WTC11 (cell line): ENCODE measurements at regions of chr6 and their contacts with region 1.

Region 1: DNA sequence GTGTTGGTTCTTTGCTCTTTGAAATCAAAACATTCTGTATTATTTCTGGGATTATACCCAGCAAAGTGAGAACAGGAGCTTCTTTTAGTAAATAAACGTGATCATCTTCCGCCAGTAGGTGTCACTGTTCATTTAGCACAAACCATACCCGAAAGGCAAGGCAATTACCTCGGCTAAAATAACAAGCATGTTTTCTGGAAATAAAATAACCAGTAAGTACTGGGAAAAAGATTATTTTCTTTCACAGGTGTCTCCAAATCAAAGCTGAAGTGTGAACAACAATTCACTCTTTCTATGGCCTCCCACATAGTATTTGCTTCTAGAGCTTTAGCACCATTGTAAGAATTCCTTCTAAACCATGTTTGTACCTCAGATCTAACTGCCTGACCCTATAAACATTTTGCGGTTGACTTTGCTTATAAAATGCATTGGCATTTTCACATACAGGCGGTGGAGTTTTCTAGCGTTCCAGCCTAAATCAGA is 144.6 kb upstream of the AGPAT4 start:
- DNase-seq: no peak
- ATAC-seq: peak; percentile 33; the same call in 1 of the 2 replicates
- H3K4me3 Mint-ChIP-seq: no peak overlapping the region
- H3K27ac Mint-ChIP-seq: no peak overlapping the region
- H3K4me1 Mint-ChIP-seq: peaks cover 27% of the 10 kb centered on the region
- H3K27me3 Mint-ChIP-seq: 0 out of 2 replicates have a peak, but pooled peaks cover 3% of the 10 kb centered on the region
- CTCF ChIP-seq: peak; percentile 73

Region 2: DNA sequence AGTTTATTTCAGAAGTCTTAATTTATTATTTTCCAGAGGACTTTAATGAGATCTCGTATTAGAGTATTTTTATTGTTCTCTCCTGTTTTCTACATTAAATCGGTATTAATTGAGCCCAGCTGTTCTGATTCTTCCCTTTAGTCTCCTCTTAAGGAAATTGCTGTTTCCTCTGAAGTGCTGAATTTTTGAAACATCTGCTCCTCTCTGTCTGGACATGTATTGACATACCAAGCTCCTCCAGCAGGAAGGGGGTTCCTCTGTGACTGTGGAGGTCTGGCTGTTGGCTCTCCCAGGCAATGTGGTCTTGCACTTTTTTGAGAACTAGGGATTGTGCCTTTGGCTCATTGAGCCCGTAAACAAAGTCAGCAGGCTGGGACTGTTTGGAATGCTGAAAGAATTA is 352.0 kb before region 1 on chr6:
- CTCF ChIA-PET with region 1: no interaction called
- POLR2A ChIA-PET with region 1: no interaction called
- DNase-seq: no peak
- ATAC-seq: no peak
- H3K4me3 Mint-ChIP-seq: no peak overlapping the region
- H3K27ac Mint-ChIP-seq: no peak overlapping the region; the same call in 1 of the 2 replicates
- H3K4me1 Mint-ChIP-seq: peaks cover 18% of the 10 kb centered on the region
- H3K27me3 Mint-ChIP-seq: no peaks in the 10 kb centered on the region
- CTCF ChIP-seq: no peak

Region 3: GRCh38 chr6:161333410-161333809 is 85.1 kb before region 1 on chr6:
- CTCF ChIA-PET with region 1: no interaction called
- POLR2A ChIA-PET with region 1: no interaction called
- DNase-seq: no peak
- ATAC-seq: no peak
- H3K4me3 Mint-ChIP-seq: no peak overlapping the region
- H3K27ac Mint-ChIP-seq: no peak overlapping the region
- H3K4me1 Mint-ChIP-seq: peaks cover 25% of the 10 kb centered on the region
- H3K27me3 Mint-ChIP-seq: peaks cover 4% of the 10 kb centered on the region; the same call in 1 of the 2 replicates
- CTCF ChIP-seq: no peak

Region 4: DNA sequence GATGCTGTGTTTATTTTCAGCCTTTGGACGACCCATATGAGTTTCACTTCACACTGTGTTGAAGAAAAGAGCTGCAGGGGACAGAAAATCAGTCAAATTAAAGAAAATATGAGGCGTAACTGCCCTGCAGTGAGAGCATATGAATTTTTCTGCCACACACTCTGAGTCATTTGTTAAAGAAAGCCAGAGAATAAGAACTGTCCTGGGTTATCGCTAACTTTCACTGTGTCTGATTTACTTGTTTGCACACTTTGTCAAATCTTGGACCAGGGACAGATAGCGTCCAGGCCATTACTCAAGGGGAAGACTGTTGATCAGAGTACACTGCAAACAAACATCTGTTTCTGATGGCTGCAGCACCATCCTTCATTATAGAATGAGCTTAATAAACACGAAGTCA is 17.8 kb before region 1 on chr6:
- CTCF ChIA-PET with region 1: interaction called, 16 read pairs
- POLR2A ChIA-PET with region 1: no interaction called
- DNase-seq: no peak
- ATAC-seq: no peak
- H3K4me3 Mint-ChIP-seq: no peak overlapping the region
- H3K27ac Mint-ChIP-seq: no peak overlapping the region
- H3K4me1 Mint-ChIP-seq: peaks cover 8% of the 10 kb centered on the region
- H3K27me3 Mint-ChIP-seq: no peaks in the 10 kb centered on the region; the same call in 1 of the 2 replicates
- CTCF ChIP-seq: no peak

Region 5: DNA sequence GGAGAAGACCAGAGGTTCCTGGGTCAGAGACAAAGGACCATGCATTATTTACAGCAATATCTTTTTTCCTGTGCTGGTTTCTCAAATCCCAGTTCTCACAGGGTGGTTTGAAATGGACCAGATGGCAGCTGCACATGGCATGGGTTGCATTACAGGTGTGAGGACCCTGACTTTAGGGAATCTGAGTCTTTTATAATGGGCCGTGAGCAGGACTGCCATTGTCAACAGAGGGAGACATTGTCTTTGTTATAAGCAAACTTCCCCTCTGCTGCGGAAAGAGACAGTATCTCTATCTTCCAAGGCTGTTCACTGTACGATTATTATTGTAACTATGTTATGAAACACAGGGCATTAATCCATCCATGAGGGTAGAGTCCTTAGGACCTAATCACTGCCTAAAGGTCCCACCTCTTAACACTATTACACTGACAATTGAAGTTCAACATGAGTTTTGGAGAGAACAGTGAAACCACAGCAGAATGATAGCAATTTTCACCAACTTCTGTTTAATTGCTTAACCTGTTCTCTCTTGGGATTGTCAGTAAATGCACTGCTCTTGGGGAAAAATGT is 11.5 kb after region 1 on chr6:
- CTCF ChIA-PET with region 1: interaction called, 19 read pairs
- POLR2A ChIA-PET with region 1: no interaction called
- DNase-seq: no peak
- ATAC-seq: 0 out of 2 replicates have a peak, but pooled peaks have one; percentile 34
- H3K4me3 Mint-ChIP-seq: no peak overlapping the region
- H3K27ac Mint-ChIP-seq: no peak overlapping the region
- H3K4me1 Mint-ChIP-seq: peaks cover 5% of the 10 kb centered on the region
- H3K27me3 Mint-ChIP-seq: peaks cover 5% of the 10 kb centered on the region; the same call in 1 of the 2 replicates
- CTCF ChIP-seq: no peak

Region 6: GRCh38 chr6:161444464-161444863 is 26.0 kb after region 1 on chr6:
- CTCF ChIA-PET with region 1: interaction called, 32 read pairs
- POLR2A ChIA-PET with region 1: no interaction called
- DNase-seq: peak; percentile 30
- ATAC-seq: peak; percentile 38
- H3K4me3 Mint-ChIP-seq: peak overlapping the region; percentile 37
- H3K27ac Mint-ChIP-seq: no peak overlapping the region
- H3K4me1 Mint-ChIP-seq: peaks cover 29% of the 10 kb centered on the region
- H3K27me3 Mint-ChIP-seq: peaks cover 45% of the 10 kb centered on the region
- CTCF ChIP-seq: no peak

Region 7: DNA sequence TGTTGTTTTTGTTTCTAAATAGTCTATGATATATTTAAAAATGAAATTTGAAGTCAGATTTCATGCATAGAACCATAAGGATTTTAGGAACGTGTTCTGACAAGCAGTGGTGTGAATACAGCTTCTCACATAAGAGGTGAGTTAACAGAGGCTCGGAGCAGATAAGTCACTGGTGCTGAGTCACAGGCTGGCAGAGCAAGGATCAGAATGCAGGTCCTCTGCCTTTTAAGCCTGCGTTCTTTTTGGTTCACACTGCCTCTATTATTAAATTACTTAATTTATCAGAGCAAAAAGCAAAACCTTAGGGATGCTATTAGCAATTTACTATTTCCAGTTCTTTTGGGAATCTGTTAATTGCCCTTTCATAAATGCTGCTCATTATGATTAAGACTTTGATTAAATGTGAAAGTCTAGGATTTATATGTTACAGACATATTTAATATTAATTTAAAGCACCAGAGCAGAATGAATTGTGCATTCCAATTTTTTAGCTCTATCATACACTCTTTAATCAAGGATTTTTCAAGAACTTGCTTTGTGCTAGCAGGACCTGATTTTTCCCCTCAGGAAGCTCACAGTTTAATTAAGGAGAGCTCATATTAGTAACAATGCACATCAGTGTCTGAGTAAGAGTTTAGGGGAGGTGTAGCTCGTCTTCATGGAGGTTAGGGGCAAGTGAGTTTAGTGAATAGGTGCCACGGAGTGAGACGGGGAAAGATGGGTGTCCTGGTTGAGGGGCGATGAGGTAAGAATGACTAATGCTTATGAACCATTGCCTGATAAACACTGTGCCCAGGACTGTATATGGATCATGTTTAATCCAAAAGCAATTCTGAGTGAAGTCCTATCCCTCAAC is 68.1 kb after region 1 on chr6:
- CTCF ChIA-PET with region 1: interaction called, 16 read pairs
- POLR2A ChIA-PET with region 1: no interaction called
- DNase-seq: no peak
- ATAC-seq: no peak
- H3K4me3 Mint-ChIP-seq: no peak overlapping the region
- H3K27ac Mint-ChIP-seq: no peak overlapping the region
- H3K4me1 Mint-ChIP-seq: peaks cover 15% of the 10 kb centered on the region
- H3K27me3 Mint-ChIP-seq: no peaks in the 10 kb centered on the region; the same call in 1 of the 2 replicates
- CTCF ChIP-seq: no peak

Region 8: DNA sequence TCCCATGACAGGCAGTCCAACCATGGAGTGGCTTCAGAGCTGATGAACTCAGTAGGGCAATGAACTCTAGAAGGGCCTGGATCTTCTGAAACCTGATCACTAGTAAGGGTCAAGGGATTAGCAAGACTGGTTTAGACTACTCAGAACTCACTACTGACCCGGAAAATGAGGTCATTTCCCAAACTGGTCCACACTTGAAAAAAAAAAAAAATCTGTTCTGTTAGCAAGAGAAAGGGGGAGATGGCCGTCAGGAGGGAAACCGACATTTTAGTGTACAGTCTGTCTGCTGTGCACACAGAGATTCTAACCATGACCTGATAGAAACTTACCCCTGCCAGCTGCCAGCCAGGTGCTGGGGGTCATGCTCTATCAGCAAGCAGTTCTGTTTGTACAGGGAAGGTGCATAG is 117.7 kb after region 1 on chr6:
- CTCF ChIA-PET with region 1: no interaction called
- POLR2A ChIA-PET with region 1: no interaction called
- DNase-seq: no peak
- ATAC-seq: no peak
- H3K4me3 Mint-ChIP-seq: no peak overlapping the region
- H3K27ac Mint-ChIP-seq: no peak overlapping the region
- H3K4me1 Mint-ChIP-seq: no peaks in the 10 kb centered on the region
- H3K27me3 Mint-ChIP-seq: no peaks in the 10 kb centered on the region; the same call in 1 of the 2 replicates
- CTCF ChIP-seq: no peak

Region 9: DNA sequence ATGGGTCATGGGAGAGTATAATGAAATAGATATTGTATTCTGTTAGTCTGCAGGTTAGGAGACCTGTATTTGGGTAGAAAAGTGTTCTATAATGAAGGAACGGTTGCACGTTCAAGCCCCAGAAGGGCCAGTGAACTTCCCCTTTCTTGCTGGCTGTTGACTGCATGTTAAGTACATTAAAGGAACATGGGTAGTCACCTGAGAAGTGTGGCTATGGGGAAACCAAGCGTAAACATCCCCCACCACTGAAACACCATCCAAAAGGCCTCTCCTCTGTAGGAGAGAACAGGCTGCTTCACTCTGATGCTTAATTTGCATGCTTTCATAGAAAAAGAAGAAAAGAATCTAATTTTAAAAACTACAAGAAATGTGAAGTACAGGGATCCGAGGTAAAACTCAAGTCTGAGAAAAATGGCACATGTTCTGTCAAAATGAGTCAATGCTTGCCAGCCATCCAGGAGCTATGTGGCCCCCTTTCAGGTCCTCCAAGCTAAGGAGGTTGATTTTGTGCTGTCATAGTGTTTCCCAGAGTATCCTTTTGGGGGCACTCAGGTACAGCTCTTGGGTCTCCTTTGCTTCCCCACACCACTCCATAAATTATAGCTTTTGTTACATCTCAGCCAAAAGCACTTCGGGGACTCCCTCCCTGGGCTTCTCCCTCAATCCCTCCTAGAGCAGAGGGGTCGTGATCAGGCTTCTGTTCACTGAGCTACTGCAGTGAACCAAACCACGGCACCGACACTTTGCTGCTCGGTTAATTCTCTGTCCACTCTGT is 139.0 kb after region 1 on chr6:
- CTCF ChIA-PET with region 1: interaction called, 10 read pairs
- POLR2A ChIA-PET with region 1: no interaction called
- DNase-seq: no peak
- ATAC-seq: peak; percentile 89
- H3K4me3 Mint-ChIP-seq: no peak overlapping the region
- H3K27ac Mint-ChIP-seq: no peak overlapping the region
- H3K4me1 Mint-ChIP-seq: no peaks in the 10 kb centered on the region
- H3K27me3 Mint-ChIP-seq: no peaks in the 10 kb centered on the region
- CTCF ChIP-seq: no peak